ENCODE measurements at regions of chr19 and their contacts with region 1.

Region 1: GRCh38 chr19:10543420-10544241 is at the start of gene ATG4D:
- H3K4me3 ChIP-seq: peak within 1 kb of the TSS; percentile 89
- H3K27ac ChIP-seq: peak within 1 kb of the TSS; percentile 94
- H3K4me1 ChIP-seq: no peaks in the 10 kb centered on the region
- CTCF ChIP-seq: no peak

Region 2: DNA sequence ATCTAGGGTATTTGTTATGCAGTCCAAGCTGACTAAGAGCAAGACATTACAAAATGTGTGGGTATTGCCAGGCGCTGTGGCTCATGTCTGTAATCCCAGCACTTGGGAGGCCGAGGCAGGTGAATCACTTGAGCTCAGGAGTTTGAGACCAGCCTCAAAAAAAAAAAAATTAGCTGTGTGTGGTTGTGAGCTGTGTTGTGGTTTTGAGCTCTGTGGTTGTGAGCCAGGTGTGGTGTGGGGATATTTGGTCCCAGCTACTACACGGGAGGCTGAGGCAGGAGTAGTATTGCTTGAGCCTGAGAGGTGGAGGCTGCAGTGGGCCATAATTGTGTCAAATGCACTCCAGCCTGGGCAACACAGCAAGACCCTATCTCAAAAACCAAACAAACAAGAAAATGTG is 34.9 kb before region 1 on chr19:
- CTCF ChIA-PET with region 1: interaction called, 18 read pairs
- POLR2A ChIA-PET with region 1: no interaction called
- H3K4me3 ChIP-seq: no peak overlapping the region
- H3K27ac ChIP-seq: no peak overlapping the region
- H3K4me1 ChIP-seq: no peaks in the 10 kb centered on the region
- CTCF ChIP-seq: no peak

Measured in HEK293 (cell line).